ENCODE measurements at regions of chr2 and their contacts with region 1.

Region 1: DNA sequence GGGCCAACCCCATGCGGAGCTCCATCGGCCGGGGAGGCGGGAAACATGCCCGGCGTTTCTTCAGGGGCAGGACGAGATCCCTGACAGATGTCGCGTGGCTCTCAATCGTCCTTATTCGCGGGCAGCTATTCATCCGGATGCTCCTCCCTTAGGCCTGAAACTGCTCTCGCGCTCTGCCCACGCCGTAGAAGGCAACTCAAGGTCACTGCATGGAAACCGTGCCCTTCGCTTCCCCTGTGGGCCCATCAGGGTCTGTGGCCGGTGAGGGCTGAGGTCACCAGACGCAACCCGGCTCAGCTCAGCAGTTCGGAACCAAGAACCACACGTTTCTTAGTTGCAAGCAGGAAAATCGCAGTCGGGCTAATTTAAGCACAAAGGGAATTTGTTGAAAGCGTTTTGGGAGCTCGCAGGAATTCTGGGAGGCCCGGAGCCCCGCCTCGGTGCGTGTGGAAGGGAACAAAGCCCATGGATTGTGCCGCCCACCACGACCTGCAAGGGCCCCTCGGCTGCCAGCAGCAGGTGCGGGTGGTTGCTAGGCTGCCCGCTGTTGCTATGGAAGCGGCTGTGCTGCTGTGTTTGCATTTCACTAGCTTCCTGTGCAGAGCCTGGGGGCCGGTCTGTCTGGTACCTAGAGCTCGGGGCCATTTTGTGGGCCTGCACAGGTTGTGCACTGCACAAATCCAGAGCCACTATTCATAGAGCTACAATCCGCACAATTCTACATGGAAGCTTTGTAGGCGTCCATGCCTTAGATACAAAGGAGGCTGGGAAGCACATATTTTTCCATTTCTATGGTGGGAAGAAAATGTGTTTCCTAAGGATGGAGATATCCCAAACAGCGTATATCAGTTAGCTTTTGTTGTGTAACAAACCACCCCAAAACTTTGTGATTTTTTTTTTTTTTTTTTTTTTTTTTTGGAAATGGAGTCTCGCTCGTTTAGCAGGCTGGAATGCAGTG is 6.0 kb upstream of the ALLC start:
- DNase-seq: peak; percentile 51 to 83 (median 62)
- ATAC-seq: peak; percentile 75
- H3K4me3 ChIP-seq: peak overlapping the region; percentile 60
- H3K4me3 Mint-ChIP-seq: peak overlapping the region; percentile 91
- H3K27ac ChIP-seq: peak overlapping the region; percentile 12 to 29
- H3K27ac Mint-ChIP-seq: peak overlapping the region; percentile 65
- H3K4me1 ChIP-seq: peaks cover 21% of the 10 kb centered on the region
- H3K4me1 Mint-ChIP-seq: peaks cover 17% of the 10 kb centered on the region
- H3K27me3 ChIP-seq: peaks cover 0 to 2% of the 10 kb centered on the region in 2 experiments
- H3K27me3 Mint-ChIP-seq: no peaks in the 10 kb centered on the region
- CTCF ChIP-seq: no peak

Region 2: GRCh38 chr2:2121887-2122286 is 1530.1 kb before region 1 on chr2:
- CTCF ChIA-PET with region 1: no interaction called
- POLR2A ChIA-PET with region 1: no interaction called
- intact Hi-C with region 1: loop called (anchors 2 to 5 kb)
- DNase-seq: no peak
- ATAC-seq: no peak
- H3K4me3 ChIP-seq: no peak overlapping the region
- H3K4me3 Mint-ChIP-seq: no peak overlapping the region
- H3K27ac ChIP-seq: no peak overlapping the region
- H3K27ac Mint-ChIP-seq: no peak overlapping the region
- H3K4me1 ChIP-seq: peaks cover 4% of the 10 kb centered on the region
- H3K4me1 Mint-ChIP-seq: no peaks in the 10 kb centered on the region
- H3K27me3 ChIP-seq: peaks cover 0 to 3% of the 10 kb centered on the region in 2 experiments
- H3K27me3 Mint-ChIP-seq: peaks cover 12% of the 10 kb centered on the region
- CTCF ChIP-seq: no peak

Region 3: GRCh38 chr2:3379647-3380534 is 272.1 kb before region 1 on chr2 and contains the start of gene TRAPPC12:
- CTCF ChIA-PET with region 1: no interaction called
- POLR2A ChIA-PET with region 1: interaction called, 13 read pairs
- intact Hi-C with region 1: no loop called
- DNase-seq: peak; percentile 88 to 95 (median 92)
- ATAC-seq: peak; percentile 78
- H3K4me3 ChIP-seq: peak within 1 kb of the TSS; percentile 91
- H3K4me3 Mint-ChIP-seq: peak within 1 kb of the TSS; percentile 97
- H3K27ac ChIP-seq: peak within 1 kb of the TSS; percentile 85 to 94
- H3K27ac Mint-ChIP-seq: peak within 1 kb of the TSS; percentile 98
- H3K4me1 ChIP-seq: peaks cover 42% of the 10 kb centered on the region
- H3K4me1 Mint-ChIP-seq: peaks cover 70% of the 10 kb centered on the region
- H3K27me3 ChIP-seq: no peaks in the 10 kb centered on the region
- H3K27me3 Mint-ChIP-seq: no peaks in the 10 kb centered on the region
- CTCF ChIP-seq: peak; percentile 41
- total RNA-seq, gene TRAPPC12: 49.8 to 64.0 TPM

Region 4: DNA sequence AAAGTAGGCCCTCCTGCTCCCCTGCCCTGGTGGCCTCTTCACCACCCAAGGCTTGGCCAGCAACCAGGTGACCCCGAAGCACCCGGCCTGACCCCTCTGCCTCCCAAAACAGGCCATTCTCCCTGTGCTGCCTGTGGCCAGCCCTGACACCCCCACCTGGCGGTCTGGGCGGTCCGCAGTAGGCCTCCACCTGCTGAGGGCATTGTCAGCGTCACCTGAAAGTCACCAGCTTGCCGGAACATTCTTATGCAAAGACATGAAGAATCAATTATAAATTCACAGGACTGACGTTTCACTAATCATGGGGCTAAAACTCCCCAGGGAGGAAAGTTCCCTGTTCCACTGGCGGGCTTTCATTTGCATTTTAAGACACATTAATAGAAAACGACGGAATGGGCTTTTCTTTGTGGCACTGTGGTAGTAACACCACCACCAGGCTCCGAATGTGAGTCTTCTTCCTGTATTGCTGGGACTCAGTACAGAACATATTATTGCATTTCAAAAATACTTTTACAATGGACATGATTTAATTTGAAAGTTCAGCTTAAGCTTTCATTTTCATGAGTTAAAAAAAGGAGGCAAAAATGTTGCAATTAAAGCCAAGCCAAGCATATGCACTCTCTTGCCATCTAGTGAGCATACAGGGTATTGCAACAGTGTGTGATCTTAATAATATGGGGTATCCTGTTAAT is 190.0 kb before region 1 on chr2:
- CTCF ChIA-PET with region 1: no interaction called
- POLR2A ChIA-PET with region 1: no interaction called
- intact Hi-C with region 1: loop called in 1 of 2 experiments (anchors 1 kb)
- DNase-seq: peak in 4 of 14 experiments; percentile 43 to 73 (median 66)
- ATAC-seq: peak; percentile 86
- H3K4me3 ChIP-seq: no peak overlapping the region
- H3K4me3 Mint-ChIP-seq: no peak overlapping the region
- H3K27ac ChIP-seq: no peak overlapping the region
- H3K27ac Mint-ChIP-seq: peak overlapping the region; percentile 56
- H3K4me1 ChIP-seq: peaks cover 9% of the 10 kb centered on the region
- H3K4me1 Mint-ChIP-seq: peaks cover 13% of the 10 kb centered on the region
- H3K27me3 ChIP-seq: no peaks in the 10 kb centered on the region
- H3K27me3 Mint-ChIP-seq: no peaks in the 10 kb centered on the region
- CTCF ChIP-seq: peak; percentile 90

Region 5: GRCh38 chr2:3575534-3576262 is 76.3 kb before region 1 on chr2:
- CTCF ChIA-PET with region 1: interaction called, 3 read pairs
- POLR2A ChIA-PET with region 1: interaction called, 11 read pairs
- intact Hi-C with region 1: loop called (anchors 5 to 10 kb)
- DNase-seq: peak in 10 of 14 experiments; percentile 18 to 66 (median 30)
- ATAC-seq: peak; percentile 43
- H3K4me3 ChIP-seq: peak overlapping the region; percentile 70
- H3K4me3 Mint-ChIP-seq: peak overlapping the region; percentile 89
- H3K27ac ChIP-seq: peak overlapping the region; percentile 76 to 89
- H3K27ac Mint-ChIP-seq: peak overlapping the region; percentile 93
- H3K4me1 ChIP-seq: peaks cover 28% of the 10 kb centered on the region
- H3K4me1 Mint-ChIP-seq: peaks cover 46% of the 10 kb centered on the region
- H3K27me3 ChIP-seq: no peaks in the 10 kb centered on the region
- H3K27me3 Mint-ChIP-seq: no peaks in the 10 kb centered on the region
- CTCF ChIP-seq: no peak

Region 6: DNA sequence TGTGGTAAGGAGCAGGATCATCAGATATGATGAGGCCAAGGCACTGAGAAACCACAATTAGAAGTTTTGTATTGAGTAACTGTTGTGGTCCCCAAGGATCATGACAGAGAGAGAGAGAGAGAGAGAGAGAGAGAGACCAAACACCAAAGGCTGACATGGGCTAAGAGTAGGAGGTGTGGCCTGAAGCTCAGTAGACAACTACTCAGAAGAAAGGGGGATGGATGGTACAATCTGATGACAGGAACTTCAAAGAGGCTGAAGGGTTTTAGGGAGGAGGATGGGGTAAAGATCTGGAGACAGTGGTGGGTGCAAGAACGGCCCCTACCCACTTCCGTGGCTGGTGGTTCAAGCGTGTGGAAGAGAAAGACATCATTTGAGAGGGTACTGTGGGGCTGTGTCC is 186.4 kb after region 1 on chr2:
- CTCF ChIA-PET with region 1: no interaction called
- POLR2A ChIA-PET with region 1: no interaction called
- intact Hi-C with region 1: no loop called
- DNase-seq: no peak
- ATAC-seq: no peak
- H3K4me3 ChIP-seq: no peak overlapping the region
- H3K4me3 Mint-ChIP-seq: no peak overlapping the region
- H3K27ac ChIP-seq: no peak overlapping the region
- H3K27ac Mint-ChIP-seq: no peak overlapping the region
- H3K4me1 ChIP-seq: no peaks in the 10 kb centered on the region
- H3K4me1 Mint-ChIP-seq: no peaks in the 10 kb centered on the region
- H3K27me3 ChIP-seq: no peaks in the 10 kb centered on the region
- H3K27me3 Mint-ChIP-seq: peaks cover 4% of the 10 kb centered on the region
- CTCF ChIP-seq: no peak